ENCODE measurements at regions of chr1 and their contacts with region 1.

Region 1: DNA sequence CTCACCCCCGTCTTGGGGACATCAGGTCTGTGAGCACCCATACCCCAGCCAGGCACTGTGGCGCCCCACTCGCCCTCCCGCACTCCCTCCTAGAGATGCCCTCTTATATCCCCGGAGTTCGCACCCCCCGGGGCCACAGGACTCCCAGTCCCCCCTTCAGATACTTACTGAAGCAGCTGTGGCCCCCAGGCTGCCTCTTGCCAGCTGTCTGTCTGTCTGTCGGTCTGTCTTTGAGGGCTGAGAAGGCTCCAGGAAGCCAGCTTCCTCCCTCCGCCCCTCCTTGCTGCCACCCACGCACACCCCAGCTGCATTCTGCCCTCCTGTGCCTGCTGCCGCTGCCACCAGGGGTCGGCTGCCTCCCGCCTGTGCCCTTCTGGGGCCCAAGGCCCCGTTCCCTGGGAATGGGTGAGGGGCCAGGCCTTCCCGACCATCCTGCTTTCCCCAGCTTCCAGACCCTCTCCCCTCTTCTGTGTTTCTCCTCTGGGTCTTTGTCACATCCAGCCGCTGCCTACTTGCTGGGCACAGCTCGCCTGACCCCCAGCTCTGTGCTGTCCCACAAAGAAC is at the start of gene PTPN7:
- DNase-seq: no peak
- H3K4me3 ChIP-seq: no peak within 1 kb of the TSS
- H3K27ac ChIP-seq: no peak within 1 kb of the TSS
- H3K4me1 ChIP-seq: peaks cover 2 to 29% (median 11%) of the 10 kb centered on the region in 4 experiments
- H3K27me3 ChIP-seq: no peaks in the 10 kb centered on the region
- CTCF ChIP-seq: peak; percentile 13 to 27 (median 15); a peak in 2 of 4 replicates
- EP300 ChIP-seq: no peak
- POLR2A ChIP-seq: no peak
- RAD21 ChIP-seq: no peak
- total RNA-seq, gene PTPN7: not detected in 2 replicates

Region 2: DNA sequence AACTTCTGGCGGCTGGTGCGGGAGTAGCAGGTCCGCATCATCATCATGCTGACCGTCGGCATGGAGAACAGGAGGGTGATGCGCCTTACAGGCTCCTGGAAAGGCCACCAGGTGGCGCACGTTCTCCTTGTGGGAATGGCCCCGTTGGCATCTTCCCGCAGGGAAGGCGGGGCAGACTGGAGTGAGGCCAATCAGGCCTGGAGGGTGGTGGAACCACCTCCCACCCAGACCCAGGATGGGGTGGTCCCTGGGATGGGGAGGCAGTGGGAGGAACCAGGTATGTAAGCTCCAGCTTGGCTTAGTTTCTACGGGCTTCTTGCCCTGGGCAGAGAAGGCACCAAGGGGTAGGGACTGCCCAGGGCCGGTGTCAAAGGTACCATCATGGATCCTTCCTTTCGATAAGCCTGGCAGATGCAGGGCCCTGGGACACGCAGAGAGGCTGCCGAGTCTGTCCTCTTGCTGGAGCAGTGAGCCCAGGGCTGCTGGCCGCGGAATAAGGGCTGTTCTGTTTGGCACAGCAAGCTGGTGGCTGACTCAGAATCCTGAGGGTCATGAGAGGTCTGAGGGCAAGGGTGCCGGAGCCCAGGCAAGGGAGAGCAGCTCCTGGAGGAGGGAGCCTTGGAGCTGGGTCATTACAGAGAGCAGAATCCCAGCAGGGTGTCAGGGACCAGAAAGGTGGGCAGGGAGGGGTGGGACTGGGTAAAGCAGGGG is 24.4 kb after region 1 on chr1:
- CTCF ChIA-PET with region 1: interaction called, 23 read pairs
- POLR2A ChIA-PET with region 1: interaction called, 3 read pairs
- DNase-seq: peak; percentile 97 to 99
- H3K4me3 ChIP-seq: no peak overlapping the region
- H3K27ac ChIP-seq: no peak overlapping the region
- H3K4me1 ChIP-seq: peaks cover 0 to 6% (median 4%) of the 10 kb centered on the region in 4 experiments; a peak in 5 of 7 replicates
- H3K27me3 ChIP-seq: no peaks in the 10 kb centered on the region; a peak in 3 of 7 replicates
- CTCF ChIP-seq: peak; percentile 89 to 99 (median 97)
- EP300 ChIP-seq: no peak
- POLR2A ChIP-seq: no peak
- RAD21 ChIP-seq: peak; percentile 79 to 84

Region 3: DNA sequence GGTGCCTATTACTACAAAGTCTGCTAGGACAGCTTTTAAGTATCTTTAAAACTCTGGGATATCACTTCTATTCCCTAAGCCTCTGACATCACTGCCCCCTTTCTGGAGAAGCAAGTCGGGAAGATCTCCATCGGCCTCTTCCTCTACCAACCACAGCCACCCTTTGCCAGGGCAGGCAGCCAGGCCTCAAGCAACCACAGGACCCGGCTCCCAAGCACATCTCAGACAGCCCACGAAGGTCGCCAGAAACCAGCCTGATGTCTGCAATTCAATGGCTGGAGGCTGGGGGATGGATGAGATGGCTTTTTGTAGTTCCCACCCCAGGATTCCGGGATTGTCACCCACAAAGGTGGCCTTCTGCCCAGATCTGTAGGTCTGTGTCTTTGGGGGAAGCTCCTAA is 103.8 kb after region 1 on chr1:
- CTCF ChIA-PET with region 1: no interaction called
- POLR2A ChIA-PET with region 1: no interaction called
- DNase-seq: no peak
- H3K4me3 ChIP-seq: no peak overlapping the region
- H3K27ac ChIP-seq: no peak overlapping the region
- H3K4me1 ChIP-seq: peaks cover 0 to 4% (median 1%) of the 10 kb centered on the region in 4 experiments; a peak in 1 of 7 replicates
- H3K27me3 ChIP-seq: no peaks in the 10 kb centered on the region
- CTCF ChIP-seq: no peak
- EP300 ChIP-seq: no peak
- POLR2A ChIP-seq: no peak
- RAD21 ChIP-seq: no peak